Activated CD4-positive, alpha-beta T cell treated with anti-CD3 and anti-CD28 coated beads for 36 hours (primary cell): ENCODE measurements at regions of chr20 and their contacts with region 1.

Region 1: GRCh38 chr20:49278036-49278817 is at the start of gene ZNFX1:
- DNase-seq: peak; percentile 100
- ATAC-seq: peak; percentile 80
- H3K4me3 Mint-ChIP-seq: peak within 1 kb of the TSS; percentile 92
- H3K27ac Mint-ChIP-seq: peak within 1 kb of the TSS; percentile 98
- H3K4me1 Mint-ChIP-seq: peaks cover 52% of the 10 kb centered on the region
- H3K27me3 Mint-ChIP-seq: no peaks in the 10 kb centered on the region
- total RNA-seq, gene ZNFX1: 36.4 to 43.8 TPM

Region 2: DNA sequence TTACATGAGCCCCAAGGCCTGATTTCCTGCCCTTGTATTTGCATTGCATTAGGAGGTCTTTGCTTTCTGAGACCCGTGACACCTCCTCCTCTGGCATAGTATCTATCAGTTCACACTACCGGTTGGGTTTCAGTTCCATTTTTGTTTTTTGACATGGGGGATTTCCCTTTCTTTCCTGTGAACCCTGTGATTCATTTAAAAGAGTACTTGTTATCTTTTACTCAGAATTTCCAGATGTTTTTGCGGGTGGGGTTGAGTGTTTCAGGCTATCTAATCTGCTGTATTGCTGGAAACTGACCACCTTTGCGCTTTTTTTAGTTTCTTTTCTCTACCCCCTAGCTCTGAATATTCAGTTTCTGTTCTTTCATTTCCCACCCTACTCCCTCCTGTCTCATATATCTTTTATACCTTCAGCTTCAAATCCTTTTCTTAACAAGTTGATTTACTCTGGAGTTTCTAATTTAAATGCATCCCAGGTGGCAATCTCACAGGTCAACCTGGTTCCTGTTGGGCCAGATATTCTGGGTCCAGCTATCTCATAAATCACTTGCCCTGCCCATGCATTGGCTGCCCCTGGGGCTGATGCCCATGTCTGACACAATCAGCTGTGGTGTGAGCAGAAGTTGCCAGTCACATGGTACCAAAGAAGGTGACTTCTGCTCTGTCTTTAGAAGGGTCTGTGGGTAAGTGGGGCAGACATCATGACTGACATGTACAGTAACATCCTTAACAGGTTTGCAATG is 1790.9 kb before region 1 on chr20:
- CTCF ChIA-PET with region 1: no interaction called
- POLR2A ChIA-PET with region 1: no interaction called
- intact Hi-C with region 1: loop called in 1 of 2 experiments (anchors 5 kb)
- DNase-seq: peak; percentile 78
- ATAC-seq: peak; percentile 88
- H3K4me3 Mint-ChIP-seq: peak overlapping the region; percentile 26
- H3K27ac Mint-ChIP-seq: peak overlapping the region; percentile 99
- H3K4me1 Mint-ChIP-seq: peaks cover 80% of the 10 kb centered on the region
- H3K27me3 Mint-ChIP-seq: no peaks in the 10 kb centered on the region

Region 3: GRCh38 chr20:48921151-48921898 is 356.9 kb before region 1 on chr20 and contains the start of gene ARFGEF2:
- CTCF ChIA-PET with region 1: no interaction called
- POLR2A ChIA-PET with region 1: no interaction called
- intact Hi-C with region 1: loop called in 1 of 2 experiments (anchors 2 kb)
- DNase-seq: peak; percentile 95
- ATAC-seq: peak; percentile 95
- H3K4me3 Mint-ChIP-seq: peak within 1 kb of the TSS; percentile 96
- H3K27ac Mint-ChIP-seq: peak within 1 kb of the TSS; percentile 96
- H3K4me1 Mint-ChIP-seq: peaks cover 45% of the 10 kb centered on the region
- H3K27me3 Mint-ChIP-seq: no peaks in the 10 kb centered on the region
- total RNA-seq, gene ARFGEF2: 19.3 to 20.5 TPM

Region 4: GRCh38 chr20:49166534-49167449 is 111.4 kb before region 1 on chr20:
- CTCF ChIA-PET with region 1: no interaction called
- POLR2A ChIA-PET with region 1: interaction called, 13 read pairs
- intact Hi-C with region 1: loop called (anchors 2 to 5 kb)
- DNase-seq: no peak
- ATAC-seq: peak; percentile 79
- H3K4me3 Mint-ChIP-seq: peak overlapping the region; percentile 37
- H3K27ac Mint-ChIP-seq: peak overlapping the region; percentile 85
- H3K4me1 Mint-ChIP-seq: peaks cover 74% of the 10 kb centered on the region
- H3K27me3 Mint-ChIP-seq: no peaks in the 10 kb centered on the region

Region 5: DNA sequence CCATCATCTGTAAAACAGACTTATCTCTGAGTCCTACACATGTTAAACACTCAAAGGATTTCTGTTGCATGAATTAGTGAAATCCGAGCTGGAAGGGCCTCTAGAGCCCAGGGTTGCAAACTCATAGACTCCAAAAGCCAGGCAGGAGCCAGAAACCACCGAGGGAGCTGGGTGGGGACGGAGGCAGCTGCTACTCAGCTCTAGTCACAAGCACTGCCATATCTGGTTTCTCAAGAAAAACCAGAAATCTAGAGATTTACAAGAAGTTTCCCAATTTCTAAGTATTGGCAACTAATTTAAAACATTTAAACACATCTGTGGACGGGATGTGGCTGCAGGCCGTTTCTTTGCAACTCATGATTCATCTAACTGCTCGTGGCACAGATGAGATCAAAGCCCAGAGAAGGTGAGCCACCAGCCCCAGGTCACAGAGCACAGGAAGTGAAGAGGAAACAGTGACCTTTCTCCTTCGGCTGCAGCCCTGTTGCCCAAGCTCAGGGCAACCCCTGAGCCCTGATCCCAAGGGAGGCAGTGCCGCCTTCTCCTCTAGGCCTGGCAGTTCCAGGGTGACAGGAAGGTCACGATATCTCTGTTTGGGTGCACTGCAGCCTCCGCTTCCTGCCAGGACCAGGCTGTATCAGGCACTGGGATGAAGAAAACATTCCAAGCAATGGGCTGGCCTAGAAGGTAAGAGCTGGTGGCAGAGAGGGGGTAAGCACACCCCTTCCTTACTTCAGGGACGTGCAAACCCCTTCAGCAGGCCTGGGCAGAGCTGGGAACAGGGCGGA is 316.1 kb after region 1 on chr20:
- CTCF ChIA-PET with region 1: no interaction called
- POLR2A ChIA-PET with region 1: interaction called, 7 read pairs
- intact Hi-C with region 1: loop called (anchors 1 to 5 kb)
- DNase-seq: peak; percentile 87
- ATAC-seq: peak; percentile 62
- H3K4me3 Mint-ChIP-seq: peak overlapping the region; percentile 76
- H3K27ac Mint-ChIP-seq: peak overlapping the region; percentile 96
- H3K4me1 Mint-ChIP-seq: peaks cover 77% of the 10 kb centered on the region
- H3K27me3 Mint-ChIP-seq: peaks cover 3% of the 10 kb centered on the region

Region 6: GRCh38 chr20:50115591-50116372 is 837.6 kb after region 1 on chr20:
- CTCF ChIA-PET with region 1: no interaction called
- POLR2A ChIA-PET with region 1: interaction called, 3 read pairs
- intact Hi-C with region 1: loop called in 1 of 2 experiments (anchors 5 kb)
- DNase-seq: peak; percentile 96
- ATAC-seq: peak; percentile 81
- H3K4me3 Mint-ChIP-seq: peak overlapping the region; percentile 93
- H3K27ac Mint-ChIP-seq: peak overlapping the region; percentile 88
- H3K4me1 Mint-ChIP-seq: peaks cover 39% of the 10 kb centered on the region
- H3K27me3 Mint-ChIP-seq: no peaks in the 10 kb centered on the region